Stomach (tissue), 19 donors: ENCODE measurements at regions of chr11 and their contacts with region 1.

Region 1: GRCh38 chr11:2699531-2700414 is at the start of gene KCNQ1OT1:
- DNase-seq: peak; percentile 90 to 98
- H3K4me3 ChIP-seq: peak within 1 kb of the TSS; percentile 63 to 72 (median 68)
- H3K27ac ChIP-seq: peak within 1 kb of the TSS; percentile 88 to 96 (median 92)
- H3K4me1 ChIP-seq: peaks cover 0 to 69% (median 37%) of the 10 kb centered on the region in 4 donors
- H3K27me3 ChIP-seq: no peaks in the 10 kb centered on the region
- CTCF ChIP-seq: no peak
- EP300 ChIP-seq: no peak
- POLR2A ChIP-seq: peak in 2 of 4 donors; percentile 74 to 87
- total RNA-seq, gene KCNQ1OT1: 2.2 to 15.1 (median 2.3) TPM

Region 2: GRCh38 chr11:2870460-2870859 is 170.7 kb after region 1 on chr11:
- intact Hi-C with region 1: loop called (anchors 10 kb)
- DNase-seq: no peak
- H3K4me3 ChIP-seq: no peak overlapping the region
- H3K27ac ChIP-seq: no peak overlapping the region
- H3K4me1 ChIP-seq: peaks cover 0 to 8% (median 2%) of the 10 kb centered on the region in 4 donors
- H3K27me3 ChIP-seq: peaks cover 12 to 50% (median 31%) of the 10 kb centered on the region in 3 donors
- CTCF ChIP-seq: no peak
- EP300 ChIP-seq: no peak
- POLR2A ChIP-seq: no peak